ENCODE measurements at regions of chr1 and their contacts with region 1.

Region 1: DNA sequence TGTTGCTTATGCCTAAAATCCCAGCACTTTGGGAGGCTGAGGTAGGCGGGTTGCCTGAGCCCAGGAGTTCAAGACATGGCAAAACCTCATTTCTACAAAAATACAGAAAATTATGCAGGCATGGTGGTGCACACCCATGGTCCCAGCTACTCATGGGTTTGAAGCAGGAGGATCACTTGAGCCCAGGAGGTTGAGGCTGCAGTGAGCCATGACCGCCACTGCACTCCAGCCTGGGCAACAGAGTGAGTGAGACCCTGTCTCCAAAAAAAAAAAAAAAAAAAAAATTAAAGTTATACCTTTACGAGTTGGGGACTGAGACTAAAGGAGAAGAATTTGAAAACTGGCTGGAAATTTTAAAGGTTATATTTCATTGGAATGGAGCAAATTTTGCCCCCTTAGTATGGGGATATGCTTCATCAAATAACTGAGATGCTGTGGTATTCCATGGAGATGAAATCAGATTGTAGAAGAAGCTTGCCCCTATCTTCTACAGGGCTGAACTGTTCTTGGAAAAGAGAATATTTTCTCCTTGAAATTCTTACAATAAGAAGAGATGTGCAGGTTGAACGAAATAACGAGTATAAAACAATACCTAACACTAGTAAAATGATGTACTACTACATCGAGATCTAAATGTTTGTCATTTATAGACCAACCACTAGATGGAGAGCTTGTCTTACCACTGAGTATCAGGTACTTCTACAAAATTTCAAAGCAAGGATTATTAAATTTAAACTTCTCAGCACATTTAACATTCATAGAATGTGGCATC is 34.9 kb upstream of the SCYL3 start:
- DNase-seq: no peak
- H3K4me3 ChIP-seq: no peak overlapping the region
- H3K27ac ChIP-seq: no peak overlapping the region
- H3K4me1 ChIP-seq: peaks cover 8 to 13% (median 12%) of the 10 kb centered on the region in 4 donors
- H3K27me3 ChIP-seq: no peaks in the 10 kb centered on the region
- CTCF ChIP-seq: peak; percentile 57 to 71 (median 68)
- EP300 ChIP-seq: no peak
- POLR2A ChIP-seq: no peak

Region 2: DNA sequence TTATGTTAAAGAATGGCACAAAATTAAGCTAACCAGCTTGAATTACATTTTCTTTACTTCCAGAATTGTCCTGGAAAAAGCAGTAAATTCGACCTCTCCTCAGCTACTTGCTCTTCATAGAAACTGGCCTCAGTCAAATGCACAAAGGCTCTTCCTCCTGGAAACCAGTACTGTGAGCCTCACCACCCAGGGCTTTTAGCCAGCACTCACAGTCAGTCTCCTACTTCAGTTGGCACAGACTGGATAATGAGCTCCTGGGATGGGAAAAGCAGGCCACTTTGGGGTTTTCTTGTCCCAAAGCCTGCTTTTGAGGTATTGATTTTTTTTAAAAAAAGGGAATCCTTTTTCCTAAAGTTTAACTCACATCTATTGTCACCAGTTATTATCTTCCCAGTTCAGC is 75.3 kb before region 1 on chr1:
- intact Hi-C with region 1: no loop called
- DNase-seq: no peak
- H3K4me3 ChIP-seq: no peak overlapping the region
- H3K27ac ChIP-seq: no peak overlapping the region
- H3K4me1 ChIP-seq: no peaks in the 10 kb centered on the region
- H3K27me3 ChIP-seq: no peaks in the 10 kb centered on the region
- CTCF ChIP-seq: no peak
- EP300 ChIP-seq: no peak
- POLR2A ChIP-seq: no peak

Region 3: DNA sequence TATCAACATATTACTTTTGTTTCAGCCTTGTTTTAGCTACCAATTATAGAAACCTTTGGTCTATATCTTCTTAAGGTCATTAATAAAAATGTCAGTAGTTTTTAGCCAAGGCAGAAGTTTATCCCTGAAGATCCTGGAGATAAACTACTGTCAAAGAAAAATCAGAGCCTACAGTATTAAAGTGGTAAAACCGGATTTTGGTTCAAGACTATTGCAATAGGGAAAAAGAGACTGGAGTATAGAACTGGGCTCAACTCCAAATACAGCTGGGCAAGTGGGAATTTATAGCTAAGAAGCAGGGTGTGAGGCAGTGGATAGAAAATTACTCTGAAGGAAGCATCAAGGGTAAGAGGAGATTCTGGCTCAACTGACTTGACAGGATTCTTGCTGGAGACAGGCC is 207.5 kb after region 1 on chr1:
- intact Hi-C with region 1: no loop called
- DNase-seq: no peak
- H3K4me3 ChIP-seq: no peak overlapping the region
- H3K27ac ChIP-seq: no peak overlapping the region
- H3K4me1 ChIP-seq: peaks cover 0 to 48% (median 21%) of the 10 kb centered on the region in 4 donors
- H3K27me3 ChIP-seq: no peaks in the 10 kb centered on the region
- CTCF ChIP-seq: no peak
- EP300 ChIP-seq: no peak
- POLR2A ChIP-seq: no peak

Region 4: GRCh38 chr1:170929835-170930554 is 1001.4 kb after region 1 on chr1:
- intact Hi-C with region 1: loop called (anchors 5 kb)
- DNase-seq: no peak
- H3K4me3 ChIP-seq: peak overlapping the region in 3 of 4 donors; percentile 10 to 35 (median 15)
- H3K27ac ChIP-seq: peak overlapping the region; percentile 54 to 67 (median 62)
- H3K4me1 ChIP-seq: peaks cover 0 to 21% (median 15%) of the 10 kb centered on the region in 4 donors
- H3K27me3 ChIP-seq: no peaks in the 10 kb centered on the region
- CTCF ChIP-seq: peak; percentile 66 to 75 (median 73)
- EP300 ChIP-seq: no peak
- POLR2A ChIP-seq: no peak

Measured in esophagus muscularis mucosa (tissue), 4 donors.